ENCODE measurements at regions of chr3 and their contacts with region 1.

Region 1: DNA sequence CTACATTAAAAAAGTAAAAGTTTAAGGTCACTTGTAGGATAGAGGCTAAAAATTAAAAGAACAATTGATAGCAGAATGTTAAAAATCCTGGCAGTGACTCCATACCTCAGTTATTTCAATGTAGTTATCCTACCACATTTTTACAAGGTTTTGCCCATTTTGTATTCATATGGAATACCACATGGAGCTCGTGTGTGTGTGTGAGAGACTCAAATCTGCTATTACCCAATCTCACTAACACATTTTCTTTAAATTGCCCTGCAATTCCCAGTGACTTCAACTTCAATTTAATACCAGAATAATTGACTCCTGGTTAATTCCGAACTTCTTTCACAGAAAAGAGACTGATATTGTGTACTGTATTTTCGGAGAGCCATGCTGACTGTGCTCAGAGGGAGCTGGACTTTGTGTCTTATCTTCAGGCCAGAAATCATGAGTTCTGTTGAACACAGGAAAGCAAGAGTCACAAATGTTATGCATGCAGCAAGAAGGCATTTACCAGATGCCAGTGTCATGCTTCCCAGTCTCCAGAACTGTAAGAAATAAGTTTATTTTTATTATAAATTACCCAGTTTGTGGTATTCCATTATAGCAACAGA is 529.0 kb upstream of the NECTIN3 start:
- DNase-seq: no peak
- H3K4me3 ChIP-seq: no peak overlapping the region
- H3K27ac ChIP-seq: no peak overlapping the region
- H3K4me1 ChIP-seq: no peaks in the 10 kb centered on the region
- H3K27me3 ChIP-seq: no peaks in the 10 kb centered on the region
- CTCF ChIP-seq: no peak

Region 2: DNA sequence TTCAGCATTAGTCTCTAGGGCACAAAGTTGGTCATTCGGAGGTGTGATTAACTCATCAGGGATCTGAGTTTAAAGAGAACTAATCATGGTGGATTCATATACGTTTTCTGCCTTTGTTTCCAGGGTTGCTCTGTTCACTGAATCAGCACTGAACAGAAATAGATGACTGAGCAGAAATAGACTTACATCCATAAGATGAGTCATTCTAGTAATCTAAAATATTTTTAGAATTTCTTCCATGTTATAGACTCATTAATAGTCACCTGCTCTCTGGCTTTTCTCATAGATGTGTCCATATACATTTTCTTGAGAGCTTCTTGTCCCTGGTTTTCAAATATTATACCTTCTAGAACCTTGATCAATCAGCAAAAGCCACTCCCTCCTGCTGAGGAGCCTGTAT is 367.7 kb before region 1 on chr3:
- CTCF ChIA-PET with region 1: no interaction called
- POLR2A ChIA-PET with region 1: no interaction called
- intact Hi-C with region 1: no loop called
- DNase-seq: no peak
- H3K4me3 ChIP-seq: no peak overlapping the region
- H3K27ac ChIP-seq: no peak overlapping the region
- H3K4me1 ChIP-seq: no peaks in the 10 kb centered on the region
- H3K27me3 ChIP-seq: no peaks in the 10 kb centered on the region
- CTCF ChIP-seq: no peak

Region 3: DNA sequence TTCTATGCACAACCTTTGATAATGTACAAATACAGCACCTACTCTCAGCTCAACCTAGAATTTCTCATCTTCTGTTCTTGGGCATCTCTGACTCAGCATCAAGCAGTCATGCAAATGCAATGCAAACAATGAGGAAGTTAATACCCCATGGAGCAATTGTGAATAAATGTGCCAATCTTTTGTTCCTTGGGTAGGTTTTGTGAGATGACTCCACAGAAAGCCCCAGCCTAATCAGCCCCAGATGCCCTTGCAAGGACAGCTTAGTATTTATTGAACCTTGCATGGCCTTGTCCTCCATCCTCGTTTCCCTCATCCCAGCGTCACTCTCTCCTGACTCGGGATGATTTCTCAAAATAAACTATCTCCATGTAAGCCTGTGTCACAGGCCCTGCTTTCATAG is 34.3 kb after region 1 on chr3:
- CTCF ChIA-PET with region 1: no interaction called
- POLR2A ChIA-PET with region 1: no interaction called
- intact Hi-C with region 1: no loop called
- DNase-seq: peak; percentile 63 to 86
- H3K4me3 ChIP-seq: no peak overlapping the region
- H3K27ac ChIP-seq: peak overlapping the region; percentile 34; the same call in 1 of the 2 replicates
- H3K4me1 ChIP-seq: peaks cover 14% of the 10 kb centered on the region
- H3K27me3 ChIP-seq: no peaks in the 10 kb centered on the region
- CTCF ChIP-seq: no peak

Region 4: GRCh38 chr3:111252779-111253178 is 710.1 kb after region 1 on chr3:
- CTCF ChIA-PET with region 1: no interaction called
- POLR2A ChIA-PET with region 1: interaction called, 10 read pairs
- intact Hi-C with region 1: no loop called
- DNase-seq: no peak
- H3K4me3 ChIP-seq: no peak overlapping the region
- H3K27ac ChIP-seq: no peak overlapping the region
- H3K4me1 ChIP-seq: no peaks in the 10 kb centered on the region
- H3K27me3 ChIP-seq: no peaks in the 10 kb centered on the region
- CTCF ChIP-seq: no peak

Measured in PC-9 (cell line).